Heart left ventricle (tissue), 16 donors: ENCODE measurements at regions of chr3 and their contacts with region 1.

Region 1: DNA sequence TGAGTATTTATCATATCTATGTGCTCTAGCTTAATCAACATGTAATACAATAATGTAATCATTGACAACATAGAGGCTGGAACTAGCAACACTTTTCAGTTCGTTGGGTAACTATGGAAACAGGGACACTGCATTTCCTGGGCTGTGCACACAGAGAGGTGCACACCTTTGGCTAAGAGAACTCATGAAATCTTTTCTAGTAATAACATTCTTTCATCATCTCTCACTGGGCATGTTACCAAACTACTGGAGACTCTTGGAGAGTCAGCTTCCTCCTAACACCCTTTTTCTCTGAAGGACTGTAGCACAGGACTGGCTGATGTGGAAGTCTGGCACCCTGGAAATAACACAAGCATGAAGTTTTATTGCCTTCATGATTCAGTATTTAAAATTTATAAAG is 135.6 kb downstream of the KCNMB2 start:
- DNase-seq: no peak
- ATAC-seq: peak in 3 of 4 donors; percentile 22 to 62 (median 25)
- H3K4me3 ChIP-seq: no peak overlapping the region
- H3K27ac ChIP-seq: peak overlapping the region in 6 of 12 donors; percentile 3 to 32 (median 22)
- H3K4me1 ChIP-seq: peaks cover 0 to 38% (median 19%) of the 10 kb centered on the region in 12 donors
- H3K27me3 ChIP-seq: no peaks in the 10 kb centered on the region
- CTCF ChIP-seq: no peak
- POLR2A ChIP-seq: no peak

Region 2: GRCh38 chr3:177928156-177928873 is 743.5 kb before region 1 on chr3:
- intact Hi-C with region 1: no loop called
- DNase-seq: no peak
- ATAC-seq: peak in 3 of 4 donors; percentile 54 to 69 (median 61)
- H3K4me3 ChIP-seq: no peak overlapping the region
- H3K27ac ChIP-seq: no peak overlapping the region
- H3K4me1 ChIP-seq: peaks cover 0 to 34% (median 13%) of the 10 kb centered on the region in 12 donors
- H3K27me3 ChIP-seq: no peaks in the 10 kb centered on the region
- CTCF ChIP-seq: no peak
- POLR2A ChIP-seq: no peak

Region 3: GRCh38 chr3:178454726-178455125 is 217.1 kb before region 1 on chr3:
- intact Hi-C with region 1: loop called in 2 of 10 experiments (anchors 10 kb)
- DNase-seq: peak; percentile 70 to 82 (median 80)
- ATAC-seq: peak; percentile 93 to 98 (median 96)
- H3K4me3 ChIP-seq: no peak overlapping the region
- H3K27ac ChIP-seq: peak overlapping the region in 10 of 12 donors; percentile 21 to 76 (median 59)
- H3K4me1 ChIP-seq: peaks cover 0 to 32% (median 16%) of the 10 kb centered on the region in 12 donors
- H3K27me3 ChIP-seq: no peaks in the 10 kb centered on the region
- CTCF ChIP-seq: no peak
- POLR2A ChIP-seq: no peak

Region 4: GRCh38 chr3:178536211-178537079 is 135.3 kb before region 1 on chr3 and contains the start of gene KCNMB2:
- intact Hi-C with region 1: loop called in 2 of 10 experiments (anchors 10 kb)
- DNase-seq: no peak
- ATAC-seq: peak; percentile 71 to 88 (median 84)
- H3K4me3 ChIP-seq: peak within 1 kb of the TSS; percentile 38 to 64 (median 52)
- H3K27ac ChIP-seq: peak within 1 kb of the TSS in 7 of 12 donors; percentile 0 to 53 (median 44)
- H3K4me1 ChIP-seq: peaks cover 0 to 6% (median 0%) of the 10 kb centered on the region in 12 donors
- H3K27me3 ChIP-seq: peaks cover 0 to 7% (median 0%) of the 10 kb centered on the region in 9 donors
- CTCF ChIP-seq: no peak
- POLR2A ChIP-seq: no peak
- total RNA-seq, gene KCNMB2: 1.3 to 5.7 (median 2.7) TPM in 8 of 9 donors, not detected in the other

Region 5: GRCh38 chr3:178845420-178846118 is 173.8 kb after region 1 on chr3:
- intact Hi-C with region 1: loop called in 2 of 10 experiments (anchors 10 kb)
- DNase-seq: no peak
- ATAC-seq: no peak
- H3K4me3 ChIP-seq: no peak overlapping the region
- H3K27ac ChIP-seq: peak overlapping the region in 1 of 12 donors; percentile 81
- H3K4me1 ChIP-seq: peaks cover 0 to 48% (median 16%) of the 10 kb centered on the region in 12 donors
- H3K27me3 ChIP-seq: no peaks in the 10 kb centered on the region
- CTCF ChIP-seq: no peak
- POLR2A ChIP-seq: no peak

Region 6: DNA sequence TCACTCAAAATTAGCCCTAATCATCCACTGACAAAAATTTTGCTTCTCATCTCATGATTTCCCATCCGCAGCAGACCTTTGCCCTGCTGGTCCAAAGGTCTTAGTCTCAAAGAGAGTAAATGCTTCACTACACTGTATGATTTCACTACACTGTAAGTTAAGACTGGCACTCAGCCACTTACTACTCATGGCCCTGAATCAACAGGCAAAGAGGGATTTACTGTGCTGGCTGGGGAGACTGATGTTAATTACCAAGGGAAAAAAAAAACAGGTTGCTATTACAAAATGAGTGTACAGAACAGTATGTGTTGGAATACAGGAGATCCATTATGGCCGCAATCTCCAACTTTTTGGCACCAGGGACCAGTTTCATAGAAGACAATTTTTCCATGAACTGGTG is 185.0 kb after region 1 on chr3:
- intact Hi-C with region 1: loop called in 1 of 10 experiments (anchors 10 kb)
- DNase-seq: no peak
- ATAC-seq: no peak
- H3K4me3 ChIP-seq: no peak overlapping the region
- H3K27ac ChIP-seq: no peak overlapping the region
- H3K4me1 ChIP-seq: peaks cover 0 to 4% (median 0%) of the 10 kb centered on the region in 12 donors
- H3K27me3 ChIP-seq: no peaks in the 10 kb centered on the region
- CTCF ChIP-seq: no peak
- POLR2A ChIP-seq: no peak